ENCODE measurements at regions of chr6 and their contacts with region 1.

Region 1: DNA sequence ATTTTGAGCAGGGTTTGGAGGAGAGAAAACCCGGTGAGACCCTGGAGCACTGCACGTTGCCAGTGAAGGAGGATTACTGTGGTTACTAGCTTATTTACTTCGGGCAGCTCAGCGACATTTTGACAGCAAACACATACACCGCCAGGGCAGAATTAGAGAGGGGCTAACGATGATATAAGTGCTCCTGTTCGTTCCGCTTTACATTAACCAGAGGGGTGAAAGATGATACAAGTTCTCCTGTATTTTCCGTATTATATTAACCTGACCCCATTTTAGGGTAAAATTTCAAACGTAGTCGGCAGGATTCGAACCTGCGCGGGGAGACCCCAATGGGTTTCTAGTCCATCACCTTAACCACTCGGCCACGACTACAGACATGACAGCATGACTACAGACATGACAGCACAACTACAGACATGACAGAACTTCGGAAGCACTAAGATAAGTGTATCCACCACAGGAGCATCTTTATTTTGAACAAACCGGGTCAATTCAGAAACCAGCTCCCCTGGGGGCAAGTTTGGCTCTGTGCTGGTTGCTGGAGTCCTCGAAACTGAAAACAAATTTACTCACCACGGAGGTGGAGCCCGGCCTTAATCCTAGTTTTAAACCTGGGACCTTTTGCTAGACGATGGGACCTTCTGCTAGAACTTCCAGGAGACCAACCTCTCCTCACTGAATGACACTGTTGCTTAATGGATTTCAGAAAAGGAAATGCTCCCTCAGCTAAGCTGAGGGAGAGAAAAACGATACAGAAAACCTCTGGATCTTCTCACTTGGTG is 80.4 kb upstream of the ZNF184 start:
- DNase-seq: peak; percentile 61
- H3K4me3 Mint-ChIP-seq: peak overlapping the region; percentile 7
- H3K27ac Mint-ChIP-seq: peak overlapping the region; percentile 56
- H3K4me1 Mint-ChIP-seq: peaks cover 10% of the 10 kb centered on the region
- H3K27me3 Mint-ChIP-seq: peaks cover 67% of the 10 kb centered on the region

Region 2: DNA sequence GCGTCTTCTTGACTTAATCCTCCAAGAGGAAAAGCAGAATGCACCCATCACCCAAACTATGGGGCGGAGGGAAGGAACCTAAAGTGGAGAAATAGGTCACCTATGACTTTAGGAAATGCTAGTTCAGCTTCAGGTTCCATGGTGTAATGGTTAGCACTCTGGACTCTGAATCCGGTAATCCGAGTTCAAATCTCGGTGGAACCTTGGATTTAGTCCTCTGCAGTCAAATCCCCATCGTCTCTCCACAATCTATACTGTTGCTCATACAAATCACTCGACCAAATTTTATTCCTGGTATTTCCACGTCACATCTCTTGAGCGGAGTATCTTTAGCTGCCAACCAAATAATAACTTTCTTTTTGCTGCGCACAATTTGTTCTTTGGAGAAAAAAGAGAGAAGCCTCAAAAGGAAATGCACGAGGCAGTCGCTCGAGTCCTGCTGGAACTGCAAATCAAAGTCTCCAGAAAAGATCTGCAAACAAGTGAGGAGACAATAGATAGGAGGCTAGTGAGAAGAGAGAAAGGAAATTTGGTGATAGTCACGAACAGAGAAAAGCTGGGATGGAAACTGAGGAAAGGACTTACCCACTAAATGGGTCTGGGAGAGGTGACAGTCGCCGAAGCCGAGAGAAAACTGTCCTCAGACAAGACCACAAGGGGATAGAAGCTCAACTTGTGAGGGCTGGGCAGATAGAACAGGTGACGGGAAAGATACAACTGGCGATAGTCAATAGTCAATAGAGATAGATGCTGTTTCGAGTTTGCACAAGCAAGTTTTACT is 257.8 kb before region 1 on chr6:
- CTCF ChIA-PET with region 1: no interaction called
- POLR2A ChIA-PET with region 1: no interaction called
- intact Hi-C with region 1: loop called (anchors 5 kb)
- DNase-seq: no peak
- H3K4me3 Mint-ChIP-seq: peak overlapping the region; percentile 1
- H3K27ac Mint-ChIP-seq: peak overlapping the region; percentile 9
- H3K4me1 Mint-ChIP-seq: peaks cover 5% of the 10 kb centered on the region
- H3K27me3 Mint-ChIP-seq: peaks cover 75% of the 10 kb centered on the region

Measured in activated CD4-positive, alpha-beta memory T cell treated with anti-CD3 and anti-CD28 coated beads for 36 hours (primary cell).